ENCODE measurements at regions of chr20 and their contacts with region 1.

Region 1: GRCh38 chr20:35699127-35699975 is at the starts of genes NFS1 and ROMO1:
- DNase-seq: peak; percentile 95
- ATAC-seq: peak; percentile 95
- total RNA-seq, gene NFS1: 54.3 TPM
- total RNA-seq, gene ROMO1: 190 TPM

Region 2: GRCh38 chr20:35601008-35601973 is 98.1 kb before region 1 on chr20:
- intact Hi-C with region 1: loop called (anchors 5 kb)
- DNase-seq: peak; percentile 91
- ATAC-seq: peak; percentile 87

Region 3: GRCh38 chr20:35635652-35636051 is 63.7 kb before region 1 on chr20:
- intact Hi-C with region 1: no loop called
- DNase-seq: no peak
- ATAC-seq: peak; percentile 37

Region 4: DNA sequence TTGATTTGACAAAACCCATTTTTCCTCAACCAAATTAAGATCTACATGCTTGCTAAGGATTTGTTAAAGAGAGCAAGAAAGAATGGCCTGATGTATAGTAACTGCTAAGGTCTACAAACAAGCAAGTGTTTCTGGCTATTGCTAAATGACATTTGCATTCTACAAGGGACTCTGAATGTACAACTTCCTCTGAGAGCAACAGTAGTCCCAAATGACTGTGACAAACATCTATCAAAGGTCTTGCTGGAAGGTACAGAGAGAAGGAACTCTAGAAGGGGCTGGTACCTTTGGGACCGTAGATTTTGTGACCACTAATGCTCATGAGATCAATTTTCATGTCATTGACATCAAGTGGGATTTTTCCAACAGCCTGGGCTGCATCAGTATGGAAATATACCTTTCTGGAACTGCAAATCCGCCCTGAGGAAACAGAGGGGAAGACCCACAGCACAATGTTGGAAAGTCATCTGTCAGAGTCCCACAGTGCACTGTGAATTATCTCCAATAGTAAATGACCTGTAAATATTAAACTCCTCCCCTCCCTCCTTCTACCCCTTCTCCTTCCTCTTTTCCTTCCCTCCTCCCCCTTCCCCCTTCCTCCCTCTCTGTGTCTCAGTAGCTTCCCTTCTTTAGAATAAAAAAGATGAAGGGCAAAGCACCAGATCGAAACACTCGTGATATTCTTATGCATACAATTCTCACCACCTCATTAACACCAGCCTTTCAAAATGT is 18.7 kb before region 1 on chr20:
- intact Hi-C with region 1: no loop called
- DNase-seq: no peak
- ATAC-seq: no peak

Region 5: DNA sequence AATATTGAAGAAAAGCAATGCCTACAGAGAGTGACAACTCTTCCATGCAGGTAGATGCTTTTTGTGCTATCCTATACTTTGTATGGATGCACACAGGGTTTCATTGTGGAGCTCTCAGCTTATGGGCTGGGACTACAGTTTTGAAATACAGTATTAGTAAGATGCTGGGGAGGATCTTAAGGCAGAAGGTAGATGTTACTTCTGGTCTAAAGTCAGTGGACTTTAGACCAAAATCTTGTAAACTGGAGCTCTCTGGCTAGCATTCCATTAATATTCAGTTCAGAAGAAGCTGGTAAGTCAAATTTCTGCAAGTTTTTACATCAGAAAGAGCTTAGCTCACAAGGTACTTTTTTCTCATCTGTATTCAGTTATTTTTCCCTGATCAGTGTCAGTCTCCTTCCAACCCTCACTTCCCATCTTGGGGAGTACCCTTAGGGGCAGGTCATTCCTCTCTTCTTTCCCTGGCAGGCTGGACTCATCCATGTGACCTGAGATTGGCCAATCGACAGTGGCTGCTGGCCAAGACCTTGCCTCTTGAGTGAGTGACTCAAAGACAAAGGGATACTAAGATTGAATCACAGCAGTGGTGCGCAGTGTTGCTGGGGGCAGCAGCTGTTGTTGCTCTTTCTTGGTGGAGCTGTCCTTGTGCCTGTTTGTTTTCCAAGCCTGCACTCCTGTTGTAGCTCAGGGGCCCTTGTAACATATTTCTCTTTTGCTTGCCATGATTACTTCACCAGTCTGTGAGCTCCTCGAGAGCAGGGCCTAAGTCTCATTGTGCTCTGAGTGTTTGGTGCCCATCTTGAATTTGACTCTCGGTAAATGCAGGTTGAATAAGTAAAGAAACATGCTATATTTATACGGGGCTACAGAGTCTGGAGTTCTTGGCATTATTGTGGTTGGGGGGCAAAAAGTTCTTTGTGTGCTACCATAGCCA is 69.6 kb after region 1 on chr20:
- intact Hi-C with region 1: no loop called
- DNase-seq: peak; percentile 96
- ATAC-seq: peak; percentile 74

Region 6: GRCh38 chr20:35972462-35972861 is 273.1 kb after region 1 on chr20:
- intact Hi-C with region 1: no loop called
- DNase-seq: no peak
- ATAC-seq: no peak